CD8-positive, alpha-beta memory T cell (primary cell): ENCODE measurements at regions of chr2 and their contacts with region 1.

Region 1: DNA sequence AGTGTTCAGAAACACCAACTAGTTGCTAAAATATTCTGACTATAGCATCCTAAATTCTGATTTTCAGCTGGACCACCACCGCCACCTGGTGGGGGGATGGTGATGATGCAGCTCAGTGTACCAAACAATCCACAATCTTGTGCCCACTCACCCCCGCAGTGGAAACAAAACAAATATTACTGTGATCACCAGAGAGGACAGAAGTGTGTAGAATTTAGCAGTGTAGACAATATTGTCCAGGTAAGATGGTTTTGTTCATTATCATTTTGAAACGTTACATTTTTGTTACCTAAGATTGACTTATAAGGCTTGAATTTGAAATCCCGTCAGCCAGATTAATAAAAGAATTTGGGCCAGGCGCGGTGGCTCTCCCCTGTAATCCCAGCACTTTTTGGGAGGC is 31.7 kb upstream of the UBXN4 start:
- DNase-seq: peak; percentile 49 to 76 (median 60)
- H3K4me3 ChIP-seq: no peak overlapping the region
- H3K4me3 Mint-ChIP-seq: no peak overlapping the region
- H3K27ac ChIP-seq: no peak overlapping the region
- H3K27ac Mint-ChIP-seq: peak overlapping the region in 1 of 8 donors; percentile 10
- H3K4me1 ChIP-seq: no peaks in the 10 kb centered on the region
- H3K4me1 Mint-ChIP-seq: peaks cover 0 to 1% (median 0%) of the 10 kb centered on the region in 3 donors
- H3K27me3 ChIP-seq: no peaks in the 10 kb centered on the region
- H3K27me3 Mint-ChIP-seq: no peaks in the 10 kb centered on the region

Region 2: DNA sequence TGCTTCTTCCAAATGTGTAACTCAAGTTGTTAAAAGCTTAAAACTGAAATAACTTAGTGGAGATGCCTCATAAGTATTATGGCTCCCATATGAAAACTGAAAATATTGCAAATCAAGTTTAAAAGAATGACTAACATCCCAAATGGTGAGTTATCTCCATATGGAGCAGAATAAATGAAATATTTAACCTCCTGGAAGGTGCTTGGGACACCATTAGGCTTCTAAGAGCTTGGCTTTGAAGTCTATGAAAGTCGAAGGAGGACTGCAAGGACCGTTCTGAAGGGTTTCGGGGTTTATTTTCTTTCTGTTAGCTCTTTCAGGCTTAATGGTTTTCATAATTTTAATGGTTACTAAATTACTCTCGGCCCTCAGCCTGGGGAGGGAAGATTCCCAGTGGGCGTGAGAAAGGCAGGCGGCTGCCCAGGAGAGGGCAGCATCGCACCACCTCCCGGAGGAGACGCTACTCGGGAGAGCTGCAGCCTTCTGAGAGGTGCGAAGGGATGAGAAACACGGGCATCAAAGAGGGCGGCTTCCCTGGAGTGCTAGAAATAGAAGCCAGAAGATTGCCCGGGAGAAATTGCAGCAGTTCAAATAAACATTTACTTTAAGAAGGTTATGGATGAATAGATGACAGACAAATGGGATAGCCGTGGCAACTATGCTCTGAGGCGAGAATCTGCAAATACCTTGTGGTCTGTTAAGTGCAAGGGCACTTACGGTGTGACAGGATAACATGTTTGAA is 705.8 kb before region 1 on chr2:
- CTCF ChIA-PET with region 1: interaction called, 73 read pairs
- POLR2A ChIA-PET with region 1: interaction called, 4 read pairs
- DNase-seq: peak; percentile 46 to 77 (median 55)
- H3K4me3 ChIP-seq: no peak overlapping the region
- H3K4me3 Mint-ChIP-seq: no peak overlapping the region
- H3K27ac ChIP-seq: no peak overlapping the region
- H3K27ac Mint-ChIP-seq: peak overlapping the region in 2 of 8 donors; percentile 32 to 83
- H3K4me1 ChIP-seq: peaks cover 6% of the 10 kb centered on the region
- H3K4me1 Mint-ChIP-seq: peaks cover 4 to 6% (median 6%) of the 10 kb centered on the region in 3 donors
- H3K27me3 ChIP-seq: peaks cover 8% of the 10 kb centered on the region
- H3K27me3 Mint-ChIP-seq: peaks cover 13 to 32% of the 10 kb centered on the region in 2 donors

Region 3: GRCh38 chr2:135473567-135473966 is 236.4 kb before region 1 on chr2:
- CTCF ChIA-PET with region 1: interaction called, 27 read pairs
- POLR2A ChIA-PET with region 1: no interaction called
- DNase-seq: peak in 3 of 5 donors; percentile 7 to 50 (median 18)
- H3K4me3 ChIP-seq: no peak overlapping the region
- H3K4me3 Mint-ChIP-seq: no peak overlapping the region
- H3K27ac ChIP-seq: no peak overlapping the region
- H3K27ac Mint-ChIP-seq: no peak overlapping the region
- H3K4me1 ChIP-seq: no peaks in the 10 kb centered on the region
- H3K4me1 Mint-ChIP-seq: no peaks in the 10 kb centered on the region
- H3K27me3 ChIP-seq: no peaks in the 10 kb centered on the region
- H3K27me3 Mint-ChIP-seq: no peaks in the 10 kb centered on the region